ENCODE measurements at regions of chr16 and their contacts with region 1.

Region 1: GRCh38 chr16:53435066-53435688 is 906 bp downstream of the RBL2 start:
- DNase-seq: peak; percentile 22 to 91 (median 68)

Region 2: DNA sequence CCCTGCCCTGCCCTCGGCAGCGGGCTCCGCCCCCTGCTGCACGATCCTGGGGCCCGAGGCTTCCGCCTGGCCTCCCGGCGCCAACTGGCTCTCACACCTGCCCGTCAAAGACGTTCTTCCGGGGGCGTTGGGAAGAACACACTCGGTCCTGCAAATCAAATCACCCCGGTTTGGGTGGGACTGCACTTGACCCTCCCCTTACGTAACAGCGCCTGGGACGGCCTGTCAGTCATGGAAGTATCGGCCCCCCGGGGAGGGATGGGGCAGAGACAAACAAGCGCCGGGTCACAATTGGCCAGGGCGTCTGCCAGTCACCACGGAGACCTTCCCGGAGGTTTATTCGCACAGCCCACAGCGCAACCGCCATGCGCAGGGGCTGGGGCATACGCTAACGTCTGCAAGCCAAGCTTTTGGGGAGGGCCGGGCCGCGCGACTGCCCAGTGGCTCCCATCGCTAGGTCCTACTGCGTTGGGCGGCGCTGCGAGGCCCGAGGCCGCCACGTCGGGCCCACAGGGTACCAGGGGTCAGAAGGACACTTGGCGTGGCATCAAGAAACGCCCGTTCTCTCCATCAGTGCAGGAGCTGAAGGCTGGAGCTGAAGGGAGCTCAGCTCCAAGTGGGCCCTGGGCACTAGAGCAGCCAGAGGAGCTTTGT is 68.2 kb after region 1 on chr16:
- intact Hi-C with region 1: loop called (anchors 2 kb)
- DNase-seq: peak; percentile 100

Region 3: DNA sequence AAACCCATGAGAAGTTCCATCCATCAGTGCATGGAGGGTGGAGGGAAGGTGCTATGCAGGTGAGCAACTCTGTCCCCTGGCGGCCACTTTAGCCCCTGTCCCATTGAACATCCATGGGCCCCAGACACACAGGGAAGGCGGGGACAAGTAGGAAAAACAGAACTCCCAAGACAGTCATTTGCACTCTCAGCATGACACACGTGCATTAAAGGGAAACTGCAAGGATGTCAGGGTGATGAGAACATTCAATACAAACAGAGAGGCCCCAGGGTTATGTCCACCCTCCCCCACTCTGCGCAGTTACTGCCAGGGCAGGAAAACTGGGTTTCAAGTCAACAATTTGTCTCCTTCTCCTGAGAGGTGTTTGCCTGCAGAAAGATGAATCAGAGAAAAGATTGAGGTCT is 111.8 kb after region 1 on chr16:
- intact Hi-C with region 1: no loop called
- DNase-seq: no peak

Region 4: GRCh38 chr16:53829186-53829747 is 394.1 kb after region 1 on chr16:
- intact Hi-C with region 1: no loop called
- DNase-seq: no peak